Heart right ventricle (tissue), 16 donors: ENCODE measurements at regions of chr18 and their contacts with region 1.

Region 1: GRCh38 chr18:2776601-2777000 is 70.2 kb upstream of the EMILIN2 start:
- DNase-seq: no peak
- ATAC-seq: no peak
- H3K4me3 ChIP-seq: no peak overlapping the region
- H3K27ac ChIP-seq: no peak overlapping the region
- H3K4me1 ChIP-seq: no peaks in the 10 kb centered on the region
- H3K27me3 ChIP-seq: no peaks in the 10 kb centered on the region
- CTCF ChIP-seq: no peak

Region 2: DNA sequence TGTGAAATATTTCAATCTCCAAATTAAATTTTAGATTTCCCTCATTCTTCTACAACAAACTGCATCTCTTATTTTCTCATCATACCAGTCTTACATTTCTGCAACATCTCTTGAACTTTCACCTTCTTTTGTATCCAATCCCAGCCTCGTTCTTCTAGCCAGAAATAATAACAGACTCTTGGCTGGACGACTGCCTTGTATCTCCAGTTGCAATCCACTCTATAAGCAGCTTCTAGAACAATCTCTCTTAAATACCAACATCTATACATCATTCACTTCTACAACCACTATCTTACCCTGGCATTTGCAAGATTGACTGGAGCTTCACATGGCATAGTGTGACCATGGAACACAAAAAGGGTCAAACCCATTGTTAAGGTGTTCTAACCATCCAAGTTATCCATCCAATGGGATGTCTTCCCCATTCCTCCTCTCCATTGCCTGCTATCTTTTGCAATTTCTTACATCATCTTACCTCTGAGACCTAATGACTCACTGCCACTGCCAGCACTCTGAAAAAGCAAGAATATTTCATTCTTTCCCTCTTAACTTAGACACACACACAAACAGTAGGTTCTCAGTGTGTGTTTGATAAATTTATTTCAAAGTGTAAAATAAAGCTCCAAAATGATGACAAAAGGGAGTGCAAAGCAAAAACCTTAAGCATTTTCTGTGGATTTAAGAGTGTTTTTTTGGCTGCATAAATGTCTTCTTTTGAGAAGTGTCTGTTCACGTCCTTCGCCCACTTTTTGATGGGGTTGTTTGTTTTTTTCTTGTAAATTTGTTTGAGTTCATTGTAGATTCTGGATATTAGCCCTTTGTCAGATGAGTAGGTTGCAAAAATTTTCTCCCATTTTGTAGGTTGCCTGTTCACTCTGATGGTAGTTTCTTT is 350.9 kb before region 1 on chr18:
- intact Hi-C with region 1: no loop called
- DNase-seq: no peak
- ATAC-seq: no peak
- H3K4me3 ChIP-seq: no peak overlapping the region
- H3K27ac ChIP-seq: no peak overlapping the region
- H3K4me1 ChIP-seq: no peaks in the 10 kb centered on the region
- H3K27me3 ChIP-seq: no peaks in the 10 kb centered on the region
- CTCF ChIP-seq: no peak

Region 3: DNA sequence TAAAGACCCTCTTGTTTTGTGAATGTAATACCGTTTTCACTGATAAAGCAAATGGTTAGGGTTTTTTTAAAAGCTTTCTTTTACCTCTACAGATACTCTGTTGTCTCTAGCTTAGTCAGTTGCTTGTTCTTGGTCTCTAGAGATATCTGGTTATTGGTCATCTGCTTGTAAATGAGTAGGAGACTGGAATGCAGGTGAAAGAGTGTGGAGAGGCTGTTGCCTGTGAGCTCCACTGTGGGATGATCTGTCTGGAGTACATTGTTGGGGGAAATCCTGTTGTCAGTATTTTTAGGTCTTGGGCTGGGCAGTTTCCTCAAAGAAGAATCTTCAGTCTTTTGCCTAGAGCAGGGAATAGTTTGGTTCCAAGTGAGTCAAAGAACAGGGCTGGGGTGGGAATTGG is 53.4 kb before region 1 on chr18:
- intact Hi-C with region 1: loop called in 1 of 10 experiments (anchors 10 kb)
- DNase-seq: no peak
- ATAC-seq: peak in 1 of 8 donors; percentile 22
- H3K4me3 ChIP-seq: no peak overlapping the region
- H3K27ac ChIP-seq: no peak overlapping the region
- H3K4me1 ChIP-seq: peaks cover 0 to 23% (median 3%) of the 10 kb centered on the region in 9 donors
- H3K27me3 ChIP-seq: no peaks in the 10 kb centered on the region
- CTCF ChIP-seq: no peak